ENCODE measurements at regions of chr12 and their contacts with region 1.

Region 1: DNA sequence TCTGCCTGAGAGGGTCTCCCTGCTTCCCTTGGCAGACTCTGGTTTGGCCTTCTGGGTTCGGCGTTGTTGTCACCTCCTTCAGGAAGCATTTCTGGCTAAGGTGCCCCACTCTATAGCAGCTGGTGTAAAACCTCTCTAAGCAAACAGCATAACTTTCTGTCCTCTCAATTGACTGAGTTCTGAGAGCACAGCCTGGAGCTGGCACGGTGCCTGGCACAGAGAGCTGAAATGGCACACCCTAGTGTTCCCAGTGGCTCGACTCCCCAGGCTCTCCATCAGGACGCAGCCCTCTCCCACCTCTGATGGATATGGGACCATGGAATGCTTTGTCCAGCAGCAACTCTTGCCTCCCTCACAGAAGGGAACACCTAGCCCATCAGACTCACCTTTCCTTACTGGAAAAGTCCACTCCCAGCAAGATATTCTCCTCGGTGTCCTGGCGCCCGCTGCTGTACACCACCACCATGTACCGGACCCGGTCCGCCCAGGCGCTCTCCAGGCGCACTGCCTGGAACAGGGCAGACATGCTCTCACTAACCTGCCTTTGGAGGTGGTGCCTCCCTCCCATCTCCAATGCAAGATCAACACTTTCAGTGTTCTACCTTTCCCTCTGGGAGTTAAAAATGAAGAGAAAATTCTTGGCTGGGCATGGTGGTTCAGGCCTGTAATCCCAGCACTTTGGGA is 40.6 kb downstream of the SSH1 start:
- DNase-seq: peak; percentile 60
- ATAC-seq: peak; percentile 36 to 44

Region 2: GRCh38 chr12:108570743-108571608 is 245.8 kb before region 1 on chr12:
- intact Hi-C with region 1: loop called in 1 of 2 experiments (anchors 10 kb)
- DNase-seq: no peak
- ATAC-seq: no peak

Region 3: GRCh38 chr12:109093022-109093918 is 276.5 kb after region 1 on chr12 and contains the start of gene ALKBH2:
- intact Hi-C with region 1: loop called in 1 of 2 experiments (anchors 5 kb)
- DNase-seq: peak; percentile 96
- ATAC-seq: peak; percentile 74 to 77
- total RNA-seq, gene ALKBH2: 8.5 to 12.0 TPM